CD4-positive, alpha-beta T cell (primary cell): ENCODE measurements at regions of chr12 and their contacts with region 1.

Region 1: GRCh38 chr12:130747867-130748740 is 32.0 kb upstream of the RIMBP2 start:
- DNase-seq: peak; percentile 48 to 78 (median 66)
- ATAC-seq: peak; percentile 66
- H3K4me3 ChIP-seq: no peak overlapping the region
- H3K4me3 Mint-ChIP-seq: no peak overlapping the region
- H3K27ac ChIP-seq: no peak overlapping the region
- H3K27ac Mint-ChIP-seq: no peak overlapping the region
- H3K4me1 ChIP-seq: peaks cover 6% of the 10 kb centered on the region
- H3K4me1 Mint-ChIP-seq: peaks cover 8% of the 10 kb centered on the region
- H3K27me3 ChIP-seq: peaks cover 0 to 5% of the 10 kb centered on the region in 2 experiments
- H3K27me3 Mint-ChIP-seq: peaks cover 20% of the 10 kb centered on the region
- CTCF ChIP-seq: peak; percentile 74

Region 2: DNA sequence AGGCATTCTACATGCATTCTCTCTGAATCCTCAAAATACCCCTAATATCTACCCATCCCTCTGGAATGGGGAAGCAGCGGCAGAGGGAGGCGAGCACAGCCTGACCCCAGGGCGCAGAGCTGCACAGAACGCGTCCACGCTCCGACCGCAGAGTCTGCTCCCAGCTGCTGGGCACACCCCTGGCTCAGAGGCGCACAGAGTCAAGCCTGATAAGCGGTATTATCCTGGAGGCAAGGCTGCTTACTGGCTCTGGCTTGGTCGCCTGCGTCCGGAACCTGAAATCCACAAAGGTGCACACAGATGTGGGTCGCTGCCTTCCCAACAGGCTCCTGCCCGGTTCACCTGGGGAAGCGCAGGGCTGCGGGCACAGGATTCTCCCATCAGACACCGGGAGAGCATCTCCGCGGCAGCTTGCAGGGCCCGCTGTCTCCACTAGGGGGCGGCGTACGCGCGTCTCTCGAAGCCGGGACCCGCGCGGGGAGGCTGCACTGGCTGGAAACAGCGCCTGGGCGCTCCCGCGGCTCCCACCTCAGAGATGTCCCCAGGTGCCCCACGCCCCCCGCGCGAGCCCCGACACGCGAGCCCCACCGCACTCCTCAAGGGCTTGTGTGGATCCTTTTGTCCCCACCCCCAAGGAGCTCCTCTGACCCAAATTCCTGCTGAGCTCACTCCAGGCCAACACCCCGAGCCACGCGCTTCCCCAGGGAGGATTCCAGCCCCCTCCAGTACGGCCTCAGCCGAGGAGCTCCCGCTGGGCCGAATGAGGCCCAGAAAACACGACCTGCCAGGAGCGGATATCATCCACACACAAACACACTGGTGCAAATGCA is 705.9 kb before region 1 on chr12:
- CTCF ChIA-PET with region 1: no interaction called
- POLR2A ChIA-PET with region 1: no interaction called
- intact Hi-C with region 1: loop called in 1 of 2 experiments (anchors 5 kb)
- DNase-seq: peak in 12 of 14 experiments; percentile 10 to 55 (median 18)
- ATAC-seq: peak; percentile 34
- H3K4me3 ChIP-seq: no peak overlapping the region
- H3K4me3 Mint-ChIP-seq: no peak overlapping the region
- H3K27ac ChIP-seq: no peak overlapping the region
- H3K27ac Mint-ChIP-seq: no peak overlapping the region
- H3K4me1 ChIP-seq: no peaks in the 10 kb centered on the region
- H3K4me1 Mint-ChIP-seq: no peaks in the 10 kb centered on the region
- H3K27me3 ChIP-seq: peaks cover 21 to 41% of the 10 kb centered on the region in 2 experiments
- H3K27me3 Mint-ChIP-seq: peaks cover 68% of the 10 kb centered on the region
- CTCF ChIP-seq: peak; percentile 59

Region 3: GRCh38 chr12:130281153-130281799 is 466.8 kb before region 1 on chr12:
- CTCF ChIA-PET with region 1: no interaction called
- POLR2A ChIA-PET with region 1: no interaction called
- intact Hi-C with region 1: loop called in 1 of 2 experiments (anchors 5 kb)
- DNase-seq: peak in 9 of 14 experiments; percentile 4 to 61 (median 29)
- ATAC-seq: peak; percentile 63
- H3K4me3 ChIP-seq: no peak overlapping the region
- H3K4me3 Mint-ChIP-seq: peak overlapping the region; percentile 58
- H3K27ac ChIP-seq: no peak overlapping the region
- H3K27ac Mint-ChIP-seq: no peak overlapping the region
- H3K4me1 ChIP-seq: no peaks in the 10 kb centered on the region
- H3K4me1 Mint-ChIP-seq: peaks cover 4% of the 10 kb centered on the region
- H3K27me3 ChIP-seq: peaks cover 0 to 2% of the 10 kb centered on the region in 2 experiments
- H3K27me3 Mint-ChIP-seq: peaks cover 14% of the 10 kb centered on the region
- CTCF ChIP-seq: peak; percentile 76

Region 4: GRCh38 chr12:130737731-130738130 is 10.4 kb before region 1 on chr12:
- CTCF ChIA-PET with region 1: no interaction called
- POLR2A ChIA-PET with region 1: no interaction called
- intact Hi-C with region 1: no loop called
- DNase-seq: no peak
- ATAC-seq: no peak
- H3K4me3 ChIP-seq: no peak overlapping the region
- H3K4me3 Mint-ChIP-seq: no peak overlapping the region
- H3K27ac ChIP-seq: no peak overlapping the region
- H3K27ac Mint-ChIP-seq: no peak overlapping the region
- H3K4me1 ChIP-seq: no peaks in the 10 kb centered on the region
- H3K4me1 Mint-ChIP-seq: no peaks in the 10 kb centered on the region
- H3K27me3 ChIP-seq: peaks cover 4 to 10% of the 10 kb centered on the region in 2 experiments
- H3K27me3 Mint-ChIP-seq: peaks cover 57% of the 10 kb centered on the region
- CTCF ChIP-seq: no peak

Region 5: DNA sequence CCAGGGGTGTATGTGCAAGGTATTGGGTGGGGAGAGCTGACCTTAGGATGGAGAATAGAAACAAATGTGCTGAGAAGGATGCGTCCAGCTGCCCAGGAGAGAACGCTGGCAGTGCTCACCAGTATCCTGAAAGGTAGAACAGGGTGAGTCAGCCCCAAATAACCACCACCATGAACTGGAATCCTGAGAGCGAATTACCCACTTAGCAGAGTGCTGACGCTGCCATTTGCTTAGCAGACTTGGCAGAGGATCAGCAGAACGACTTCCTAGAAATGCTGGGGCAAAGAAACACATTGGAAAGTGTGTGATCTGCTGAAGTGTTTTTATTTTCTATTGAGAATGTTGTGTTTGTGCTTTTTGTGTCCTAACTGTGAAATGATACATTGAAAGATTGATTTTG is 419.2 kb after region 1 on chr12:
- CTCF ChIA-PET with region 1: no interaction called
- POLR2A ChIA-PET with region 1: no interaction called
- intact Hi-C with region 1: no loop called
- DNase-seq: no peak
- ATAC-seq: no peak
- H3K4me3 ChIP-seq: no peak overlapping the region
- H3K4me3 Mint-ChIP-seq: no peak overlapping the region
- H3K27ac ChIP-seq: no peak overlapping the region
- H3K27ac Mint-ChIP-seq: no peak overlapping the region
- H3K4me1 ChIP-seq: no peaks in the 10 kb centered on the region
- H3K4me1 Mint-ChIP-seq: no peaks in the 10 kb centered on the region
- H3K27me3 ChIP-seq: no peaks in the 10 kb centered on the region
- H3K27me3 Mint-ChIP-seq: peaks cover 15% of the 10 kb centered on the region
- CTCF ChIP-seq: no peak